ENCODE measurements at regions of chr2 and their contacts with region 1.

Region 1: GRCh38 chr2:231674587-231675338 is 33.6 kb upstream of the PTMA start:
- DNase-seq: no peak
- H3K4me3 ChIP-seq: no peak overlapping the region
- H3K27ac ChIP-seq: no peak overlapping the region
- H3K27me3 ChIP-seq: no peaks in the 10 kb centered on the region
- CTCF ChIP-seq: peak; percentile 88

Region 2: DNA sequence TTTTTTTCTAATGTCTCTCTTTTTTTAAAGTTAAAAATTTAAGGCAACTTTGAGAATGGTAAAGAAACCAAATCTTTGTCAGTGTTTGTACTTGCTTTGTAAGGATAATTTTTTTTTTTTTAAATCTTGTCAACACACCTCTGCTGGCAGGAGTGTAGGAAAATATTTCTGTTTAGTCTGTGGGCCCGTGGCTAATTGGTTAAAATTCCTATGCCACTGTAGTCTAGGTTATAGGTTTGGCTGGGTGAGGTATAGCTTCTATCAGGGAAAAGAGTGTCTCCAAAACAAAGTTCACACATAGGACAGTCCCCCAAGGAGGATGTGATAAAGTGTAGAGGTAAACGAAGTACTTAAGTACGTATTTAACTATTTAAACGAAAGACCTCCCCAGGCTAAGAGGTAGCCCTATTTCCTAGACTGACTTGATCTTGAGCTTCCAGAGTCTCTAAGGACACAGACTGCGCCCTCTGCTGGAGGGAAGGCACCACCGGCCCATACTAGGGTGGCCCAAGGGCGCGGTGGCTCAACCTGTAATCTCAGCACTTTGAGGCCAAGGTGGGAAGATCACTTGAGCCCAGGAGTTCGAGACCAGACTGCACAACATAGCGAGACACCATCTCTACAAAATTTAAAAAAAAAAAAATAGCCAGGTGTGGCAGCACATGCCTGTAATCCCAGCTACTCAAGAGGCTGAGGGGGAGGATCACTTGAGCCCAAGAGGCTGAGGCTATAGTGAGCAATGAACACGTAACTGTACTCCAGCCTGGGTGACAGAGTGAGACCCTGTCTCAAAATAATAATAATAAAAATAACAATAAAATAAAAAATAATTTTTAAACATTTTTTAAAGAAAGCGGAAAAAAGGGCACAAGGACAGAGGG is 73.2 kb before region 1 on chr2:
- CTCF ChIA-PET with region 1: interaction called, 256 read pairs
- POLR2A ChIA-PET with region 1: no interaction called
- DNase-seq: peak; percentile 48
- H3K4me3 ChIP-seq: no peak overlapping the region
- H3K27ac ChIP-seq: no peak overlapping the region
- H3K27me3 ChIP-seq: no peaks in the 10 kb centered on the region
- CTCF ChIP-seq: peak; percentile 90

Region 3: GRCh38 chr2:231632559-231633142 is 42.1 kb before region 1 on chr2:
- CTCF ChIA-PET with region 1: interaction called, 13 read pairs
- POLR2A ChIA-PET with region 1: no interaction called
- DNase-seq: peak; percentile 77
- H3K4me3 ChIP-seq: no peak overlapping the region
- H3K27ac ChIP-seq: peak overlapping the region; percentile 84
- H3K27me3 ChIP-seq: no peaks in the 10 kb centered on the region
- CTCF ChIP-seq: no peak

Region 4: GRCh38 chr2:231687133-231687852 is 12.5 kb after region 1 on chr2:
- CTCF ChIA-PET with region 1: interaction called, 15 read pairs
- POLR2A ChIA-PET with region 1: no interaction called
- DNase-seq: no peak
- H3K4me3 ChIP-seq: no peak overlapping the region
- H3K27ac ChIP-seq: no peak overlapping the region
- H3K27me3 ChIP-seq: no peaks in the 10 kb centered on the region
- CTCF ChIP-seq: peak; percentile 55

Region 5: DNA sequence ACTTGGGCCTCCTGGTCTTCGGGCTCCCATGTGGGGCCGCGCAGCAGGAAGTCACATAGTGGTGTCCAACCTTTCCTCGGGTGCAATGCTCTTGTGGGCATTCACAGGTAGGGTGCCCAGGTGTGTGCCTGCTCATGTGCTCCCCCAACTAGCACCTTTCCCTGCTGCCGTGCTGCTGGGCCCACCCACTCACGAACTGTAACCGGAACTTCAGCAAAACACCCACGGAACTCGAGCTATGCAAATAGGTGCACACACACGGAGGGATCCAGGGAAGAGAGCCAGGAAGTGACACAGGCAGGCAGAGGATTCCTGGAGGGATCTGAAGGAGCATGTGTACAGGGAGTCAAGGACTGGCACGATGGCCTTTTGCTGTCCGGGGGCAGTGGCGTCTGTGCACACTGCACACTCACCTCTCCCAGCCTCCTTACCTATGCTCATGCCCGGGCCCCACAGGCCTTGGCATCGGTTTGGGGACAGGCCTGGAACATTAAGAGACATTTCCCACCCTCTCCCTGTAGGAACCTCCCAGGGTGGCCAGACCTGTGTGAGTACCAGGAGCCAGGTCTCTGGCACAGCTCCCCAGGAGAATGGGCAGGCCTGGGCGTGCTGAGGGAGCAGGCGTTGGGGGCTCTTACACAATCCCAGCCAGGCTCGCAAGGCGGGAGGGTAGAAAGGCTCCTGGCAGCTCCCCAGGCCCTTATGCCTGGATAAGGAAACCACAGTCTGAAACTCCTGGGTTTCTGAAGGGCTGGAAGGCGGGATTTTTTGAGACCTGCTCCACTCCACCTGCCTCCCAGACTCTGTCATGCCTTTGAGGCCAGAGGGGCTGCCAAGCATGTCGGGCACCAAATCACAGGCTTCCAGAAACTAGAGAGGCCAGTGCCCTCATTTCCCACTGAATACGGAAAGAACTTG is 27.0 kb after region 1 on chr2:
- CTCF ChIA-PET with region 1: interaction called, 26 read pairs
- POLR2A ChIA-PET with region 1: interaction called, 35 read pairs
- DNase-seq: no peak
- H3K4me3 ChIP-seq: no peak overlapping the region
- H3K27ac ChIP-seq: no peak overlapping the region
- H3K27me3 ChIP-seq: no peaks in the 10 kb centered on the region
- CTCF ChIP-seq: no peak

Region 6: DNA sequence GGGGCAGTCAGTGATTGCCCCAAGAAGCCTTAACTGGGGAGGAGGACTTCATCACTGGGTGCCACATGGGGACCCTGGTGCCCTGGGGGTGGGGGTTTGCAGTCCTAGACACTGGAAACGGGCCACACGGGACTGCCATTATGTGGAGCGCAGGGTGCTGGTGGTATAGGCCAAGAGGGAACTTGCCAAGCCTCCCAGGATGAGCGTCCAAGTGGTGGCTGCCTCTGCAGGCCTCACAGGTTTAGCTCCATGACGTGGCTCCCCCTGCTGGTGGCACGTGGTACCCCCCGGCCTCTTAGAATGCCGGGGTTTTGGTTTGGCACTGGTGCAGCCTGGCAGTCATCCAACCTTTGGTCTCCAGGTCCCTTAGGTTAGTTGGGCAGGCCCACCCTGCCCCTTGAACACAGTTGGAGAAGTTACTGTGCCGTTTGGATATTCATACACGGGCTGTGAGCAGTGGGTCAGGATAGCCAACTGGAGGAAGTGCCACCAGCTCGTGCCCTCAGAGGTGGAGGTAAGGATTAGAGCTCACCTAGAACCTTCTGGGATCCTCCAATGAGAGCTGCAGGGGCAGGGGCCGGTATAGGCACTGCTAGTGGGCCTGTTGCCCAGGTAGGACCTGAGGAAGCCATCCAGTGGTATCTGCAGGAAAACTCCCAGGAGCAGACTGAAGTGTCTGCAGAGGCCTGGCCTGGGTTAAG is 39.1 kb after region 1 on chr2:
- CTCF ChIA-PET with region 1: interaction called, 227 read pairs
- POLR2A ChIA-PET with region 1: interaction called, 51 read pairs
- DNase-seq: peak; percentile 72
- H3K4me3 ChIP-seq: no peak overlapping the region
- H3K27ac ChIP-seq: peak overlapping the region; percentile 75
- H3K27me3 ChIP-seq: no peaks in the 10 kb centered on the region
- CTCF ChIP-seq: peak; percentile 94

Region 7: GRCh38 chr2:231786177-231786916 is 111.6 kb after region 1 on chr2 and contains the start of gene COPS7B:
- CTCF ChIA-PET with region 1: interaction called, 11 read pairs
- POLR2A ChIA-PET with region 1: interaction called, 4 read pairs
- DNase-seq: peak; percentile 61
- H3K4me3 ChIP-seq: peak within 1 kb of the TSS; percentile 99
- H3K27ac ChIP-seq: peak within 1 kb of the TSS; percentile 52
- H3K27me3 ChIP-seq: no peaks in the 10 kb centered on the region
- CTCF ChIP-seq: peak; percentile 47
- polyA plus RNA-seq, gene COPS7B: 47.2 and 49.2 TPM in 2 replicates

Measured in AG04450 (cell line).